GM12878 (cell line): ENCODE measurements at regions of chr9 and their contacts with region 1.

Region 1: DNA sequence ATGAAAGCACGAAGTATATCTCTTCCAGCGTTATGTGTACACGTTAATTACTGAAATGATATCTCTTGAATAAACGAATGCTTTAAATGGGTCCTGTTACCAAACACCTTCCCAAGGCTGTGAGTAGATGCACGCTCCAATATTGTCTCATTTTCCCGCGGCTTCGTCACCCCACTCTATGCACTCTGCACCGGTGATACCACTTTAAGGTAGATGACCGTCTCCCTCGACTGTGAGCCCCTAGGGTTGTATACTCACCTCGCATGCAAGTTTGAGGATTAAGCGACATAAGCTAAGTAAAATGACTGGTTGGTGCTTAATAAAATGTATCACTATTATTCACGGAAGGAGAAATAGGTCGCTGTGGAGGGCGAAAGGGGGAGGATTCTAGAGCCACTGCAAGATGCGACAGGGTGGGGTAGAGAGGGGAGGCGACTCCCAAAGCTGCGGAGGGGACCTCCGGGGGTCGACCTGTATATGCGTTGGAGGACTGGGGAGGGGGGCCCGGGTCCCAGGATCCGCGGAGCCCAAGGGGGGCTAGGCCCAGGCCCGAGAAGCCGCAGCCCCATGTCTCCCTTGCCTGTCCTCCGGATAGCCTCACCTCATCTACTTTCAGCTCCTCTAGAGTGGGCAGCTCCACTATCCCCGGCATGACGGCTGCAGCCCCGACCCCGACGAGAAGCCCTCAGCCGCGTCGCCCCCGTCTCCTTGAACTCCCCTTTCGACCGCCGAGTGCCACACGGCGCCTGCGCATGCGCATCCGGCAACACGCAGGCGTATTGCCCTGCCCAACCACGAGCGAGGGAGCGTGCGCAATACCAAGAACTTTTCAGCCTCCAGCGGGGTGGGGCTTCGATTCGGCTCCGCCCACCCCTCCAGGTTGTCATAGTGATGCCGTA is at the starts of genes MORN5 and NDUFA8:
- DNase-seq: peak; percentile 86
- ATAC-seq: peak; percentile 96
- H3K4me3 ChIP-seq: peak within 1 kb of the TSS; percentile 98
- H3K27ac ChIP-seq: peak within 1 kb of the TSS; percentile 71
- H3K4me1 ChIP-seq: no peaks in the 10 kb centered on the region
- H3K27me3 ChIP-seq: peaks cover 0 to 8% of the 10 kb centered on the region in 2 experiments; a peak in 1 of 4 replicates
- CTCF ChIP-seq: no peak
- EP300 ChIP-seq: no peak
- POLR2A ChIP-seq: peak; percentile 89
- RAD21 ChIP-seq: no peak
- polyA plus RNA-seq, gene MORN5: not detected
- polyA plus RNA-seq, gene NDUFA8: 47.3 to 93.8 TPM

Region 2: GRCh38 chr9:122144836-122145591 is 14.3 kb before region 1 on chr9:
- CTCF ChIA-PET with region 1: interaction called, 43 read pairs
- POLR2A ChIA-PET with region 1: interaction called, 3 read pairs
- RAD21 ChIA-PET with region 1: no interaction called
- SMC1A ChIA-PET with region 1: interaction called, 4 read pairs
- in situ Hi-C with region 1: no loop called
- intact Hi-C with region 1: no loop called
- DNase-seq: no peak
- ATAC-seq: peak; percentile 47; the same call in 1 of the 3 replicates
- H3K4me3 ChIP-seq: no peak overlapping the region
- H3K27ac ChIP-seq: no peak overlapping the region
- H3K4me1 ChIP-seq: no peaks in the 10 kb centered on the region
- H3K27me3 ChIP-seq: no peaks in the 10 kb centered on the region
- CTCF ChIP-seq: peak; percentile 37 to 47 (median 40); a peak in 4 of 6 replicates
- EP300 ChIP-seq: no peak
- POLR2A ChIP-seq: no peak
- RAD21 ChIP-seq: no peak

Region 3: DNA sequence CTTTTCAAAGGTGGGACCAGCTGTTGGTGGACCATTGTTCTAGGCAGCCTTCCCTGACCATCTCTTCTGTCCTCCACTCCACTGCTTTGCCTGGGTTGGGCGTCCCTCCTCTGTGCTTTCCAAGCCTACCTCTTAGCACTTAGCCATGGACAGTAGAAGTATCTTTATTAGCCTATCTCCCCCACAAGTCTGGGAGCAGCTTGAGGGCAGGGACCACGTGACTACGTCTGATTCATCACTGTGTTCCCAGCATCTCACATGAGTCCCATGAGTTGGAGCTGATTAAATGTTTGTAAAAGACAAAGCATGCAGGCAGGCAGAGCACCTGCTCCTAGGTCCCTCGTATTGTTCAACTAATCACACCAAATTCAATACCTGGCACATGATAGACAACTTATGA is 21.4 kb after region 1 on chr9:
- CTCF ChIA-PET with region 1: no interaction called
- POLR2A ChIA-PET with region 1: no interaction called
- RAD21 ChIA-PET with region 1: no interaction called
- SMC1A ChIA-PET with region 1: no interaction called
- in situ Hi-C with region 1: no loop called
- intact Hi-C with region 1: no loop called
- DNase-seq: no peak
- ATAC-seq: no peak
- H3K4me3 ChIP-seq: no peak overlapping the region
- H3K27ac ChIP-seq: no peak overlapping the region
- H3K4me1 ChIP-seq: no peaks in the 10 kb centered on the region
- H3K27me3 ChIP-seq: peaks cover 0 to 4% of the 10 kb centered on the region in 2 experiments; a peak in 2 of 4 replicates
- CTCF ChIP-seq: no peak
- EP300 ChIP-seq: no peak
- POLR2A ChIP-seq: no peak
- RAD21 ChIP-seq: no peak

Region 4: DNA sequence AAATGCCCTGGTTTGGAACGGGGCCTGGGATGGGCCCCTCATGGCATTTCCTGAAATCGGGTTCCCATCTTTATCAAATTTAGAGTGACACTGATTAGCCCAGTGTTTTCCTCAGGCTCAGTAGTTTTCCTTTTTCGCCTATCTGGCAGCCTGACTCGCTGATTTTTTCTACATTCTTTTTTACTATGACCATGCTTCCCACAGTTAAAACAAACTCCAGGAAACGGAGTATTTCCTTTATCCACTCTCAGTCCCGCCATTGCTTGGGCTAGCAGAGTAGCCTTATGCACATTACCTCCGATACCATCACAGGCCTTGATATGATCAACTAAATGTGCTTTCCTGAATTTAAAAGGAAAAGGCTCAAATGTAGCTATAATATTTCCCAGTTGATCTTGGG is 460.7 kb after region 1 on chr9:
- CTCF ChIA-PET with region 1: no interaction called
- POLR2A ChIA-PET with region 1: no interaction called
- RAD21 ChIA-PET with region 1: no interaction called
- SMC1A ChIA-PET with region 1: no interaction called
- in situ Hi-C with region 1: no loop called
- intact Hi-C with region 1: no loop called
- DNase-seq: no peak
- ATAC-seq: no peak
- H3K4me3 ChIP-seq: no peak overlapping the region
- H3K27ac ChIP-seq: no peak overlapping the region
- H3K4me1 ChIP-seq: no peaks in the 10 kb centered on the region
- H3K27me3 ChIP-seq: no peaks in the 10 kb centered on the region
- CTCF ChIP-seq: no peak
- EP300 ChIP-seq: no peak
- POLR2A ChIP-seq: no peak
- RAD21 ChIP-seq: no peak